GM12878 (cell line): ENCODE measurements at regions of chr4 and their contacts with region 1.

Region 1: DNA sequence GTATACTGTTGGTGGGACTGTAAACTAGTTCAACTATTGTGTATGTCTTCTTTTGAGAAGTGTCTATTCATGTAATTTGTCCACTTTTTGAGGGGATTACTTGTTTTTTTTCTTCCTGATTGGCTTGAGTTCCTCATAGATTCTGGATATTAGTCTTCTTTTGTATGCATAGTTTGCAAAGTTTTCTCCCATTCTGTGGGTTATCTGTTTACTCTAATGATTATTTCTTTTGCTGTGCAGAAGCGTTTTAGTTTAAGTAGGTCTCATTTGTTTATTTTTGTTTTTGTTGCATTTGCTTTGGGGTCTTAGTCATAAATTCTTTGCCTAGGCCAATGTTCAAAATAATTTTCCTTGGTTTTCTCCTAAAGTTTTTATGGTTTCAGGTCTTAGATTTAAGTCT is 26.6 kb upstream of the ANTXR2 start:
- DNase-seq: no peak
- ATAC-seq: no peak
- H3K4me3 ChIP-seq: no peak overlapping the region
- H3K27ac ChIP-seq: no peak overlapping the region
- H3K4me1 ChIP-seq: no peaks in the 10 kb centered on the region
- H3K27me3 ChIP-seq: no peaks in the 10 kb centered on the region
- CTCF ChIP-seq: no peak
- EP300 ChIP-seq: no peak
- POLR2A ChIP-seq: no peak
- RAD21 ChIP-seq: no peak

Region 2: DNA sequence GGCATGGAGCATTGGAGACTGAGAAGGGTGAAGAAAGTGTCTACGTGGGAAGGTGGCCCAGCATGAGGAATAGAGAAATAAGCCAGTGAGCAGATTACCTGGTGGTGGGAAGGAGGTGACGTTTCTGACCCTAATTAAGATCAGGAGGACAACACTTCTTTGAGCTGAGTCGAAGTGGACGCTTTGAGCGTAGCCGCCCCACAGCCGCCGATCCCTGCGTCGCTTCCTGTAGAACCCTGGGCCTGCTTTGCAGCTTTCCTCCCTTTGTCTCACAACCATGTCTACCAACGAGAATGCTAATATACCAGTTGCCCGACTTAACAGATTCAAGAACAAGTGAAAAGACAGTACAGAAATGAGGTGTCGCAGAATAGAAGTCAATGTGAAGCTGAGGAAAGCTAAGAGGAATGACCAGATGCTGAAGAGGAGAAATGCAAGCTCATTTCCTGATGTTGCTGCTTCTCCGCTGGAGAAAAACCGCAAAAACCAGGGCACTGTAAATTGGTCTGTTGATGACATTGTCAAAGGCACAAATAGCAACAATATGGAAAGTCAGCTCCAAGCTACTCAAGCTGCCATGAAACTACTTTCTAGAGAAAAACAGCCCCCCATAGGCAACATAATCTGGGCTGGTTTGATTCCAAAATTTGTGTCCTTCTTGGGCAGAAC is 20.3 kb before region 1 on chr4:
- CTCF ChIA-PET with region 1: no interaction called
- POLR2A ChIA-PET with region 1: no interaction called
- RAD21 ChIA-PET with region 1: no interaction called
- SMC1A ChIA-PET with region 1: interaction called, 4 read pairs
- in situ Hi-C with region 1: no loop called
- intact Hi-C with region 1: loop called (anchors 1 kb)
- DNase-seq: no peak
- ATAC-seq: no peak
- H3K4me3 ChIP-seq: no peak overlapping the region
- H3K27ac ChIP-seq: no peak overlapping the region
- H3K4me1 ChIP-seq: peaks cover 21% of the 10 kb centered on the region; the same call in 1 of the 2 replicates
- H3K27me3 ChIP-seq: no peaks in the 10 kb centered on the region; a peak in 3 of 4 replicates
- CTCF ChIP-seq: no peak
- EP300 ChIP-seq: no peak
- POLR2A ChIP-seq: no peak
- RAD21 ChIP-seq: no peak